ENCODE measurements at regions of chr10 and their contacts with region 1.

Region 1: DNA sequence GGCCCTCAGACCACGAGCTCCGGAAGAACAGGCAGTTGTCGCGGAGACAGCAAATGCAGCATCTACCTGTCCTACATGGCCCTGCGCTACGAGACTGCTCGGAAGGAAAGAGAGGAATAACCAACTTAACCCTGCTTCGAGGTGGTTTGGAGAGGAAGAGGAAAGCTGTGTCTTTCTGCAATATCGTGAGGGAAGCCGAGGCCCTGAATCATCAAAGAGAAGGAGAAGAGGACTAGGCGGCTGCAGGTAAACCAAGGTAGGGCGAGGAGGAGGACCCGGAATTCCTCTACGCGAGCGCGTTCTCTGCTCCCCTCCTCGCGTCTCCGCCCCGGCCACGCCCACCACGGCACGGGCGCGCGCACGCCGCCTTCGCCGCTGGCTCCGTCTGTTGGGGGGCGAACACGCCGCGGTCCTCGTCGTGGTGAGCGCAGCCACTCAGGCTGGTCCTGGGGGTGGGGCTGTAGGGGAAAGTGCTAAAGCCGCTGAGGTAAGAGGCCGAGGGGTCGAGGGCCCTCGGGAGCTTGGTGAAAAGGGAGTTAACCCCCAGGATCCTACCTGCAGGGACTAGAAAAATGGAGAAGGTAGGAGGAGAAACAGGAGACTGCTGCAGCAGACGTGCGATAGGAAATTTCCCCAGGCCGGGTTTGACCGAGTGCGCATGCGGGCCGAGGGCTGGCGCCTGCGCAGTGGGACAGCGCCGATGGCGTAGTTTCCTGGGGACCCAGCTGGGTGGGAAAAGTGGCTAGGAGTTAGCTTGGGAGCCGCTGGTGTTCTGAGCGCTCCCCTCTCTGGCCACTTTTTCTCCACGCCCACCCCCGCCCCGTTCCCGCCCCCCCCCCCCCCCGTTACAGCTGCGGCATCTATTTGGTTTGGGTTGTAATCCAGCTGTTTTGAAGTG is at the starts of genes ANAPC16 and ASCC1:
- DNase-seq: peak; percentile 84
- ATAC-seq: peak; percentile 90
- H3K4me3 ChIP-seq: peak within 1 kb of the TSS; percentile 89
- H3K27ac ChIP-seq: peak within 1 kb of the TSS; percentile 91
- H3K4me1 ChIP-seq: peaks cover 29% of the 10 kb centered on the region
- H3K27me3 ChIP-seq: no peaks in the 10 kb centered on the region
- CTCF ChIP-seq: no peak
- EP300 ChIP-seq: no peak
- POLR2A ChIP-seq: peak; percentile 97
- RAD21 ChIP-seq: no peak
- polyA plus RNA-seq, gene ANAPC16: 178 to 208 TPM
- polyA plus RNA-seq, gene ASCC1: 41.6 to 49.9 TPM

Region 2: GRCh38 chr10:71719042-71719441 is 496.9 kb before region 1 on chr10:
- CTCF ChIA-PET with region 1: no interaction called
- POLR2A ChIA-PET with region 1: no interaction called
- RAD21 ChIA-PET with region 1: no interaction called
- SMC1A ChIA-PET with region 1: no interaction called
- in situ Hi-C with region 1: no loop called
- intact Hi-C with region 1: no loop called
- DNase-seq: no peak
- ATAC-seq: no peak
- H3K4me3 ChIP-seq: no peak overlapping the region
- H3K27ac ChIP-seq: no peak overlapping the region
- H3K4me1 ChIP-seq: peaks cover 10% of the 10 kb centered on the region
- H3K27me3 ChIP-seq: no peaks in the 10 kb centered on the region
- CTCF ChIP-seq: no peak
- EP300 ChIP-seq: no peak
- POLR2A ChIP-seq: no peak
- RAD21 ChIP-seq: no peak

Region 3: DNA sequence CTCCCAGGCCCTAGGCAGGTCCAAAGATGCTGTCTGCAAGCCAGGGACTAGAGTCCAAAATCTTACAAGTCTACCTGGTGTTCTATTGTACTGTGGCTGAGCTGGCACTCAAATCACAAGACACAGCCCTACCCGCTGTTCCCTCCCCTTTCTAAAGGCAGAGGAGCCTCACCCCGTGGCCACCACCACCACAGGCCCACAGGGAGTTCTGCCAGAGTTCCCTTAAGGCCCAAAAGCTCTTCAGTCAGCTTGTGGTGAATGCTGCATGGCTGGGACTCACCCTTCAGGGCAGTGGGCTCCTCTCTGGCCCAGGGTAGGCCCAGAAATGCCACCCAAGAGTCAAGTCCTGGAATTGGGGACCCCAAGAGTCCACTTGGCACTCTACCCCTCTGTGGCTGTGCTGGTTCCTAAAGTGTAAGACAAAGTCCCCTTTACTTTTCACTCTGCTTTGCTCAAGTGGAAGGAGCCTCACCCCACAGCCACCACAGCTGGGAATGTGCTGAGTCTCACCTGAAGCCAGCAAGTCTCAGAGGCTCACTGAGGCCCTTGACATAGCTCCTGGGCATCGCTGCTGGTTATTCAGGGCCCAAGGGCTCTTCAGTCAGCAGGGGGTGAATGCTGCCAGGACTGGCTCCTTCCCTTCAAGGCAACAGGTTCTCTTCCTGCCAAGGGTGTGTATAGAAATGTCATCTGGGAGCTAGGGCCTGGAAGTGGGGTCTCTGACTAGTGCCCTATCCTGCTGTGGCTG is 316.1 kb before region 1 on chr10:
- CTCF ChIA-PET with region 1: no interaction called
- POLR2A ChIA-PET with region 1: no interaction called
- RAD21 ChIA-PET with region 1: no interaction called
- SMC1A ChIA-PET with region 1: no interaction called
- in situ Hi-C with region 1: no loop called
- intact Hi-C with region 1: loop called (anchors 5 kb)
- DNase-seq: no peak
- ATAC-seq: no peak
- H3K4me3 ChIP-seq: no peak overlapping the region
- H3K27ac ChIP-seq: no peak overlapping the region
- H3K4me1 ChIP-seq: no peaks in the 10 kb centered on the region
- H3K27me3 ChIP-seq: no peaks in the 10 kb centered on the region
- CTCF ChIP-seq: no peak
- EP300 ChIP-seq: no peak
- POLR2A ChIP-seq: no peak
- RAD21 ChIP-seq: no peak

Region 4: DNA sequence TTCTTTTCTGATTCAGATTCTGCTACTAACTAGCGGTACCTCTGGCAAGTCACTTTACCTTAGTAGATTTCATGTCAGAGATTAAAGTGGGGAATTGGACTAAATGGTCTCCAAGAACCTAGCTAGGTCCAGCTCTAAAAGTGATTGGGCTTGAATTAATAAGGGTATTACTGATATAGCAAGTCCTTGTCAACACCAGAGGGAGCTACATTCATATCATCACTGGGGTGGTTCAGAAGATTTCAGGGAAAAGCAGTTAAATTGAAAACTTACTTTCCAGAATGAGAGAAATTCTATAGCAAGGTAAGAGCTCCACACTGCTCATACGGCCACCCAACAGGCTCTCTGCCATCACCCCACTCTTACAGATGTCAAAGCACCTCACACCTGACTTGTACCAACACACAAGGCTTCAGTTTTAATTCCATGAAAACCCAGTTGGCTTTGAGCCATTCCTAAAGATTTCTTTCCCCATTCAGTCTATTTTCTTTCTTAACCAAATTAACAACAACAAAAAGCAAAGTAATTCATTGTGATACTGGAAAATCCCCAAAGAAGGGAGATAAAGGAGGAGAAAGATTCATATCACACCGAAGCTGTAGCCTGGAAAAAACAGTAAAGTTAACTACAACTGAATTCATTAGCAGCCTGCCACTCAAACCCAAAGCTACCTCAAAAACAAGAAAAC is 89.6 kb before region 1 on chr10:
- CTCF ChIA-PET with region 1: interaction called, 127 read pairs
- POLR2A ChIA-PET with region 1: interaction called, 18 read pairs
- RAD21 ChIA-PET with region 1: interaction called, 89 read pairs
- SMC1A ChIA-PET with region 1: interaction called, 122 read pairs
- in situ Hi-C with region 1: no loop called
- intact Hi-C with region 1: no loop called
- DNase-seq: no peak
- ATAC-seq: peak; percentile 42
- H3K4me3 ChIP-seq: no peak overlapping the region
- H3K27ac ChIP-seq: no peak overlapping the region
- H3K4me1 ChIP-seq: no peaks in the 10 kb centered on the region
- H3K27me3 ChIP-seq: no peaks in the 10 kb centered on the region
- CTCF ChIP-seq: peak; percentile 13 to 46 (median 28); a peak in 4 of 6 replicates
- EP300 ChIP-seq: no peak
- POLR2A ChIP-seq: no peak
- RAD21 ChIP-seq: peak; percentile 57

Region 5: DNA sequence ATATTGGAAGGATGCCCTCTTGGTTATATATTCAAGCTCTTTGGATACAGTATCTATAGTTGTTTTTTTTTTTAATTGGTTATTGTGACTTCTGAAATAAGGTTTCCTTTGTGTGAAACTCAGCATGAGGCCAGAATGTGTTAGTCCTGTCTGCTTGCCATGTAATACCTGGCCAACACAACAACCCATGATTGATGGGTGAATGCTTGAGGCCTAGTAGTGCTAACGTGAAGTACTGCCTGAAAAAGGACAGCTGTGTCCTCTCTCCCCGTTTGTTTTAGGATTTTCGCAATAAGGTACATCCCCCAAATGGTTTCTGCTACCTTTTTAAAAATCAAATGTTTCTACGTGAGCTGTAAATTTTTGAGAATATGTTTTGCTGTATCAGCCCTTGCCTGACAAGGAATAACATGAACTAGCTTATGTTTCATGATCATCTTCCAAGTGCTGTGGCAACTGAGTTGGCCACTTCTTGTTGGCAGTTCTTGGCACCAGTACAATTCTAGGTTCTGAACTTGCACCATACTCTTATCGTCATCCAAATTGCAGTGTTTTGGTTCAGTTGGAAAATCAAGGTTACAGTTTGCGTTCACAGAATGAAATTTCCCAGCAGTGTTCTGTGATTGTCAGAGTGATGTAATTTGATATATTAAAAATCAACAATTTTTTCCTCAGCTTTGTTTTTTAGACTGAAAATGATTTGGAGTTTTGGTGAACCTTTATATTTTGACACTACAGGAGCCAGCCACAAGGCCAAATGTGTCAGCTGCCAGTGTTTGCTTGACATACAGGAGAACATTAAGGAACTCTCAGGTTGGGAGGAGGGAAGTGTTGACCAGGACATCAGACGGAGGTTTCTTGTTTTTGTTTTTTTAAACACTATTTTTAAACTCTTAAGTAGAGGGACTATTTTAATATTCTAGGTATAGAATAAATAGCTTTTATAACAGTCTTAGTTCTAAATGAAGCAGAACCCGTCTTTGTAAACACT is 13.7 kb after region 1 on chr10:
- CTCF ChIA-PET with region 1: interaction called, 10 read pairs
- POLR2A ChIA-PET with region 1: interaction called, 3 read pairs
- RAD21 ChIA-PET with region 1: interaction called, 4 read pairs
- SMC1A ChIA-PET with region 1: interaction called, 15 read pairs
- in situ Hi-C with region 1: no loop called
- intact Hi-C with region 1: no loop called
- DNase-seq: no peak
- ATAC-seq: no peak
- H3K4me3 ChIP-seq: no peak overlapping the region
- H3K27ac ChIP-seq: no peak overlapping the region
- H3K4me1 ChIP-seq: peaks cover 3% of the 10 kb centered on the region
- H3K27me3 ChIP-seq: no peaks in the 10 kb centered on the region
- CTCF ChIP-seq: no peak
- EP300 ChIP-seq: no peak
- POLR2A ChIP-seq: no peak
- RAD21 ChIP-seq: no peak

Region 6: DNA sequence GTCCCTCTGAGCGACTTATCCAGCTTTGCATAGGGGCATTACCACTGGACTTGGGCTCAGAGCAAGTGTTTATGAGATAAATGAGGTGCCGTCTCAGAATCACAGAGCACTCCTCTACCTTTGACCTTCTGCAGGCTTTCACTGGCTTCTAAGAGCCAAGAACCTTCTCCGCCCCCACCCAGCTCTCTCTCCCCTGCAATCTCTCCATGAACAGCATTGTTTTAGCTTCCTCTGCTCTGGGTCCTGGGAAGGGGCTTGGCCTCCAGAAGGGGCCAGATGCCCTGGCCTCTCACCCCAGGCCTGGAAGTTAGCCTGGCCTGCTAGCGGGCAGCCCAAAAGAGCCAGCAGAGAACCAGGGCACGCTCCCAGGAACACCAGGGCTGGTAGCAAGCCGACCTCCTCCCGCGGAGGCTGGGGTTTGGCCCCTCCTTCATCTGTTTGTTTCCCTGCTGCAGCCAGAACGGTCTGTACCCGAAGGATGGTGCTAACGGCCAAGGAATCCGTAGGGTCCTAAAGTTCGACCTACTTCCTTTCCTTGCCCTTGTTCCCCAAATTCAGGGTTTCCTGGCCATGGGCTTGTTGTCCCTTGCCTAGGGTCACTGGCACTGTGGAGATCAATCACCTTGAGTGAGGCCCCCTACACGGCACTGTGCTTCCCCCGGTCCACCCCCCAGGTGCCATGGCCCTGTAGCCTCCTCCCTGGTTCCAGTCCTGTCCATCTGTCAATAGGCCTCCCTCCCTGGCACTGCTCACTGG is 39.1 kb after region 1 on chr10:
- CTCF ChIA-PET with region 1: interaction called, 18 read pairs
- POLR2A ChIA-PET with region 1: interaction called, 82 read pairs
- RAD21 ChIA-PET with region 1: interaction called, 129 read pairs
- SMC1A ChIA-PET with region 1: interaction called, 25 read pairs
- in situ Hi-C with region 1: no loop called
- intact Hi-C with region 1: loop called (anchors 5 kb)
- DNase-seq: no peak
- ATAC-seq: peak; percentile 73
- H3K4me3 ChIP-seq: peak overlapping the region; percentile 10; the same call in 1 of the 2 replicates
- H3K27ac ChIP-seq: peak overlapping the region; percentile 90
- H3K4me1 ChIP-seq: peaks cover 72% of the 10 kb centered on the region
- H3K27me3 ChIP-seq: no peaks in the 10 kb centered on the region
- CTCF ChIP-seq: peak in 1 of 3 experiments; percentile 33; a peak in 2 of 6 replicates
- EP300 ChIP-seq: no peak
- POLR2A ChIP-seq: peak; percentile 69
- RAD21 ChIP-seq: peak; percentile 40

Region 7: DNA sequence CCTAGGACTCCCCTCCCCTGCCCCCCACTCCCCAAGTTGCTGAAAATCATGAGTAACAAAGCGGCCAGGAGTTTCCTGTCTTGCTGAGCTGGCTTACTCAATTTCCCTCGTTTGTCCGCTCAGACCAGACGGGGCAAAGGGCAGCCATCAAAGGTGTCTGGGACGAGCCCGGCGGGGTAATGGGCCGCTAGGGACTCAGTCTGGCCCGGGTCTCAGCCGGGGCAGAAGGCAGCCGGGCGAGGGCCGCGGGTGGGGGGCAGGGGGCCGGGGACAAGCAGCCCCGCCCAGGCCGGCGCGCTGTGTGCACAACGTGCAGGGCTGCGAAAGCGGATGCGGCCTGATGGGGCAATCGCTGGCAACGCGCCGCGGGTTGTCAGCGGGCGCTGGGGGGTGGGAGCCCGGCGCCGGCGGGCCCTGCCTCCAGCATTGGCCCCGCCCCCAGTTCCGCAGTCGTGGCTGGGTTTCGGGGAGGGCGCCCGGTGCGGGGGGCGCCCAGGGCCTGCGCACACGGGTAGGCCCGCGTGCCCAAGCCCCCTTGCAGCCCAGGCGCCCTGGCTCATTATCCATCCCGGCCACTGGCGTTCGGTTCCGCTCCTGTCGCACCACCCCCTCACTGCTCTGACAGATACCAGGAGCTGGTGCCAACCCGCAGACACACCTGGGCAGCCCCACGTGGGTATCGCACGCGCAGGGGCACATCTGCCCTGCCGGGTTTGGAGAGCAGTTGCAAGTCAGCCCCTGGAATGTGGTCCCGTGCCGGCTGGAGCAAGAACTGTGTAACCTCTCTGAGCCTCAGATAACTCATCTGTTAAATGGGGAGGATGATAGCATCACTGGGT is 103.7 kb after region 1 on chr10:
- CTCF ChIA-PET with region 1: interaction called, 3 read pairs
- POLR2A ChIA-PET with region 1: interaction called, 9 read pairs
- RAD21 ChIA-PET with region 1: interaction called, 17 read pairs
- SMC1A ChIA-PET with region 1: interaction called, 7 read pairs
- in situ Hi-C with region 1: no loop called
- intact Hi-C with region 1: no loop called
- DNase-seq: no peak
- ATAC-seq: peak; percentile 81
- H3K4me3 ChIP-seq: peak overlapping the region; percentile 76
- H3K27ac ChIP-seq: peak overlapping the region; percentile 89
- H3K4me1 ChIP-seq: peaks cover 59% of the 10 kb centered on the region
- H3K27me3 ChIP-seq: no peaks in the 10 kb centered on the region
- CTCF ChIP-seq: no peak
- EP300 ChIP-seq: 0 out of 4 replicates have a peak, but pooled peaks of 1 of the 2 experiments have one; percentile 59
- POLR2A ChIP-seq: peak; percentile 84
- RAD21 ChIP-seq: no peak

Region 8: DNA sequence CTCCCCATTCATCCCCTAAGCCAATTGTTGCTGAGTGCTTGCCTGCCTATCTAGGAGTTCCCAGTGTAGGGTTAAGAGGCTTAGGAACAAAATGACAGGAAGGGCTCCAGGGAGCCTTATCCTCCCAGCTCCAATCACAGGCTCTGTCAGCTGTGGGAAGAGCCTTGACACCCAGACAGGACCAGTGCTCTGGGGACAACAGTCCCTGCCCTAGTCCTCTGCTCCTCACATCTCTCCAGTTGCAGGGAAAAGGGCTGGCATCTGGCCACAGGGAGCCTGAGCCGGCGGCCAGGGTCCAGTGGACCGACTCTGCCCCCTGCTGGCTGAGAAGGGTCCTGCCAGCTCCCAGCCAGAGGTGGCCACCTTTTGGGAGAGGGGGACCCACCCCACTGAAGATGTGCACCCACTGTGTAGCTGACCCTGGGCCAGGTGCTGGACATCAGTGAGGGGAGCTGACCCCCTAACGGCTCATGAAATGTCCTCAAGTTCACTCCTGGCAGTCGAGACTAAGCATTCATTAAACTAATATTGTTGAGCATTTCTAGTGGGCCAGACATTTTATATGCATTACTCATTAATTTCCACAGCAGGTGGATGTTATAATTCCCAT is 121.2 kb after region 1 on chr10:
- CTCF ChIA-PET with region 1: interaction called, 24 read pairs
- POLR2A ChIA-PET with region 1: interaction called, 10 read pairs
- RAD21 ChIA-PET with region 1: interaction called, 19 read pairs
- SMC1A ChIA-PET with region 1: interaction called, 13 read pairs
- in situ Hi-C with region 1: no loop called
- intact Hi-C with region 1: loop called (anchors 2 kb)
- DNase-seq: no peak
- ATAC-seq: peak; percentile 11; the same call in 1 of the 3 replicates
- H3K4me3 ChIP-seq: no peak overlapping the region
- H3K27ac ChIP-seq: peak overlapping the region; percentile 1; the same call in 1 of the 2 replicates
- H3K4me1 ChIP-seq: peaks cover 61% of the 10 kb centered on the region
- H3K27me3 ChIP-seq: no peaks in the 10 kb centered on the region
- CTCF ChIP-seq: peak; percentile 95 to 98 (median 96)
- EP300 ChIP-seq: no peak
- POLR2A ChIP-seq: peak; percentile 18; the same call in 1 of the 2 replicates
- RAD21 ChIP-seq: peak; percentile 91

Measured in GM12878 (cell line).